GM18951 (cell line): ENCODE measurements at regions of chr13 and their contacts with region 1.

Region 1: GRCh38 chr13:99374994-99375737 is 68.0 kb upstream of the GPR183 start:
- POLR2A ChIP-seq: no peak

Region 2: GRCh38 chr13:98731925-98732324 is 643.2 kb before region 1 on chr13:
- in situ Hi-C with region 1: no loop called
- POLR2A ChIP-seq: no peak

Region 3: GRCh38 chr13:99281811-99282263 is 93.3 kb before region 1 on chr13:
- in situ Hi-C with region 1: loop called (anchors 10 kb)
- POLR2A ChIP-seq: no peak